Heart right ventricle (tissue), 16 donors: ENCODE measurements at regions of chr9 and their contacts with region 1.

Region 1: DNA sequence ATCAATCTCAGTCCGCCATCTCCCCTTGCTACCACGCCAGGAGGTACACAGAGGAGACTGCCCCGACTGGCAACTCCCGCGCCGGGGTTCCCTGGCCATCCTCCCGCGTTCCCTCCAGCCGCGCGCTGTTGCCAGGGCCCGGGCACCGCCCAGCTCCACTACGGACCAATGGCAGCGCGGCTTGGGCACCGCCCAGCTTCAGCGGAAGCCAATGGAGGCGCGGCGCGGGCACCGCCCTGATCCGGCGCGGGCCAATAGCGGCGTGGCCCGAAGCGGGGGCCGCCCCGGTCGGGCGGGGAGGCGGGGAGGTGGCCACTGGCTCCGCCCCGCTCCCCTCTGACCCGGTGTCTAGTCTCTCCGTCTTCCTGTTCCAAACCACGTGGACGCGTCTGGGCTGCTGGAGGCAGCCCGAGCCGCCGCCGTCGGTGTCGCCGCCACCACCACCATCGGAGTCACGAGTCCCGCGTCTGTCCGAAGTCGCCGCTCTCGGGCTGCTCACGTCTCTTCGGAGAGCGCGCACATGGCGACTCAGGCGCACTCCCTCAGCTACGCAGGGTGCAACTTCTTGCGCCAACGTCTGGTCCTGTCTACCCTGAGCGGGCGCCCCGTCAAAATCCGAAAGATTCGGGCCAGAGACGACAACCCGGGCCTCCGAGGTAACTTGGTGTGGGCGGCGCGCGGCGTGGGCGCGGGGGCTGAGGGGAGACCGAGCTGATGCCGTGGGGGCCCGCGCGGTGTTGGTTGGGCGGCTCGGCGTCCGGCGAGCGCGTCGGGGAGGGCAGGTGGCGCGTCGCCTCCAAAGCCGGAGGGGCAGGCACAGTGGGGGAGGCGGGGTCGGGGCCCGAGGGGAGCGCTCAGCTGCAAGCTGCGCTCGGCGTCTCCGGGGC is at the start of gene RCL1:
- DNase-seq: peak; percentile 93 to 97
- ATAC-seq: peak; percentile 99 to 100 (median 99)
- H3K4me3 ChIP-seq: peak within 1 kb of the TSS; percentile 69 to 97 (median 82)
- H3K27ac ChIP-seq: peak within 1 kb of the TSS; percentile 42 to 87 (median 84)
- H3K4me1 ChIP-seq: peaks cover 0 to 32% (median 20%) of the 10 kb centered on the region in 9 donors
- H3K27me3 ChIP-seq: peaks cover 0 to 2% (median 0%) of the 10 kb centered on the region in 7 donors
- CTCF ChIP-seq: no peak
- total RNA-seq, gene RCL1: 4.8 to 9.9 (median 6.8) TPM

Region 2: DNA sequence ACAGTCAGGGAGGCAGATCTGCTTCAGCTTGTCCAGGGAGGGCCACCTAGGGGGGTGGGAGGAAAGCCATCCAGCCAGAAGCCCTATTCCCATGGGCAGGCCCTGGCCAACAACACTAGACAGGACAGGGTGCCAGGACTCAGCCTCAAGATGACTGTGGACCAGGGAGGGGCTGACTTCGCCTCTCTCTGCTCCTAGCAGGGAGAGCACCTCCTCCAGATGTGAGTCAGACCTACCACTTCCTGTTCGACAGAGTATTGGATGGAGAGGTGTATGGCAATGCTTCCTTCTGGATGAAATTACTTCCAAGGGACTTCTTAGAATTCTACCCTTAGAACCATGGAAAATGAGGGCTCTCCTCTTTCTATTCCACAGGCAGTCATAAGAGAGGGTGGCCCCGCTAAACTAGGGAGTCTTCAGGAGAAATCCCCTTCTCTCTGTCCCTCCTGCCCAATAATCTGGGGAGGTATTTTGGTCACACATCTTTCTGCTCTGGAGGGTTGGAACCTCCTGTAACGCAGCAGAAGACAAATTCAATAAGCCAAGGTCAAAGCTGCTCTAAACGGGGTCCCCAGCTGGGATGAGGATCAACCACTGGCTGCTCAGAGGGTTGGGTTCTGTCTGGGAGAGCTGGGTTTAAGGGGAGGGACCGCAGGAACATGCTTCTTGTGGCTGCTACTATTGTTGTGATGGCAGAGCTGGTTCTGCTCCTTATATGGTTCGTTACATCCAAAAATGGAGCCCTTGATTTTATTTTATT is 23.3 kb before region 1 on chr9:
- intact Hi-C with region 1: loop called in 2 of 10 experiments (anchors 1 to 5 kb)
- DNase-seq: no peak
- ATAC-seq: peak in 1 of 8 donors; percentile 61
- H3K4me3 ChIP-seq: no peak overlapping the region
- H3K27ac ChIP-seq: no peak overlapping the region
- H3K4me1 ChIP-seq: peaks cover 0 to 4% (median 0%) of the 10 kb centered on the region in 9 donors
- H3K27me3 ChIP-seq: no peaks in the 10 kb centered on the region
- CTCF ChIP-seq: no peak

Region 3: DNA sequence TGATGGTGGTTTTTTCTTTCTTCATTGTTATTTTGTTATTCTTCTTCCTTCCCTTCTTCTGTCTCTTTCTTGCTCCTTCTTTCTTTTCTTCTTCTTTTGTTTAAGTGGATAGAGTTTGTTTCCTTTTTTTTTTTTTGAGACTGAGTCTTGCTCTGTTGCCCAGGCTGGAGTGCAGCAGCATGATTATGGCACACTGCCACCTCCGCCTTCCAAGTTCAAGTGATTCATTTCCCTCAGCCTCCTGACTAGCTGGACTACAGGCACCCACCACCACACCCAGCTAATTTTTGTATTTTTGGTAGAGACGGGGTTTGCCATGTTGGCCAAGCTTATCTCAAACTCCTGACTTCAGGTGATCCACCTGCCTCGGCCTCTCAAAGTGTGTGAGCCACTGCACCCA is 232.6 kb after region 1 on chr9:
- intact Hi-C with region 1: no loop called
- DNase-seq: no peak
- ATAC-seq: no peak
- H3K4me3 ChIP-seq: no peak overlapping the region
- H3K27ac ChIP-seq: no peak overlapping the region
- H3K4me1 ChIP-seq: peaks cover 0 to 5% (median 0%) of the 10 kb centered on the region in 9 donors
- H3K27me3 ChIP-seq: no peaks in the 10 kb centered on the region
- CTCF ChIP-seq: no peak